ENCODE measurements at regions of chr12 and their contacts with region 1.

Region 1: DNA sequence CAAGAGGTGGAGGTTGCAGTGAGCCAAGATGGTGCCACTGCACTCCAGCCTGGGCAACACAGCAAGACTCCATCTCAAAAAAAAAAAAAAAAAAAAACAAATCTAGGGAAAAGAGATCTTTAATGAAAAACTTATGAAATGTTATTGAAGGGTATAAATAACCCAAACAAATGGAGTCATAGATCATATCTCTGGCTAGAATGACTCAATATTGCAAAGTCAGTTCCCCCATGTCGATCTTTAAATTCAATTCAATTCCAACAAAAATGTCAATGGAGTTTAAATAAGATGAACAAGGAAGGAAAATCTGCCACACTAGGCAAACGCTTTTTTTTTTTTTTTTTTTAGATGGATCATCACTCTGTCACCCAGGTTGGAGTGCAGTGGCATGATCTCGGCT is 78.7 kb downstream of the R3HDM2 start:
- DNase-seq: no peak
- ATAC-seq: no peak
- H3K4me3 ChIP-seq: no peak overlapping the region
- H3K27ac ChIP-seq: no peak overlapping the region
- H3K4me1 ChIP-seq: peaks cover 0 to 3% of the 10 kb centered on the region in 2 experiments; a peak in 1 of 5 replicates
- H3K27me3 ChIP-seq: no peaks in the 10 kb centered on the region
- CTCF ChIP-seq: no peak
- EP300 ChIP-seq: no peak
- POLR2A ChIP-seq: no peak
- RAD21 ChIP-seq: no peak

Region 2: DNA sequence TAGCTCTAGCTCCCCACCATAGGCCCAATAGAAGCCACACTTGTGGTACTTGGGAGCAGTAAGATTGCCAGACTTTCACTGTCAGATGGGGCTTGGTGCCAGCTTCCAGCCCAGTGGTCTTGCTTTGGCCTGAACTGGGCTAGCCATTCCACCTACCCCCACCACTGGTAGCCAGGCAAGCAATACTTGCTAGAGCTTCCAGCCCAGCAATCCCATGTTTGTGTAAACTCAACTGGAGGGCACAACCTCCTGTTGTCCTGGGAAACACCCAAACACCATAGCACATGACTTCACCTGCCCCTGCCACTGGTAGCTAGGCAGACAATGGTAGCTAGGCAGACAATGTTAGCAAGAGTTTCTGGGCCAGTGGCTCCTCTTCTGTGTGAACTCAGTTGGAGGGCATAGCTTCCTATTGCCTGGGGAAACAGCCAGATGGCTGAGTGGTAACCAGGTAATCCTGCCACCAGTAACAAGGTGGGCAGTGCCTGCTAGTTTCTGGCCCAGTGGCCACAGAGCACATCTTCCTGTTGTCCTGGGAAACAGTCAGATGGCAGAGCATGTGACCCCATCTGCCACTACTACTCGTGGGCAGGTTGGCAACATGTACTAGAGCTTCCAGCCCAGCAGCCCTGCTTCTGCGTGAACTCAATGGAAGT is 1931.7 kb before region 1 on chr12:
- CTCF ChIA-PET with region 1: no interaction called
- POLR2A ChIA-PET with region 1: no interaction called
- in situ Hi-C with region 1: no loop called
- intact Hi-C with region 1: no loop called
- DNase-seq: no peak
- ATAC-seq: no peak
- H3K4me3 ChIP-seq: no peak overlapping the region
- H3K27ac ChIP-seq: no peak overlapping the region
- H3K4me1 ChIP-seq: no peaks in the 10 kb centered on the region; a peak in 1 of 5 replicates
- H3K27me3 ChIP-seq: no peaks in the 10 kb centered on the region; a peak in 1 of 5 replicates
- CTCF ChIP-seq: no peak
- EP300 ChIP-seq: no peak
- POLR2A ChIP-seq: no peak
- RAD21 ChIP-seq: no peak

Region 3: DNA sequence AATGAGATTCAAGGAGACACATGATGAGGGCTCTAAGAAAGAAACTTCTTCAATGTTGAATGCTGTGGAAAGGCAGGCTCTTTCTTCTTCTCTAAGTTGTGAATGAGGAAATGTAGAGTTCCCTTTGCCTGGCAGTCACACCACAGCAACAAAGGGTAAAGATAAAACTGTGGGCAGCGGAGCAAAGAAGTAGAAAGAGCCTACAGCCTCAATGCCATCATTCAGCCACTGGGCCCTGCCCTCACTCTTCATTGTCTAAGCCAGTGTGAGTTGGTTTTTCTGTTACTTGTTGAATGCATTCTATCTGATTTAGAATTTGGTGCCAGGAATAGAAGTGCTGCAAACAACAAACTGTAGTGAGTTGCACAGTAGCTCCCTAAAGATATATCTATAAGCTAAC is 430.1 kb before region 1 on chr12:
- CTCF ChIA-PET with region 1: no interaction called
- POLR2A ChIA-PET with region 1: no interaction called
- in situ Hi-C with region 1: no loop called
- intact Hi-C with region 1: no loop called
- DNase-seq: no peak
- ATAC-seq: no peak
- H3K4me3 ChIP-seq: no peak overlapping the region
- H3K27ac ChIP-seq: no peak overlapping the region
- H3K4me1 ChIP-seq: no peaks in the 10 kb centered on the region
- H3K27me3 ChIP-seq: no peaks in the 10 kb centered on the region
- CTCF ChIP-seq: no peak
- EP300 ChIP-seq: no peak
- POLR2A ChIP-seq: no peak
- RAD21 ChIP-seq: no peak

Region 4: GRCh38 chr12:57309420-57309819 is 42.7 kb before region 1 on chr12:
- CTCF ChIA-PET with region 1: no interaction called
- POLR2A ChIA-PET with region 1: interaction called, 3 read pairs
- in situ Hi-C with region 1: no loop called
- intact Hi-C with region 1: loop called (anchors 5 kb)
- DNase-seq: no peak
- ATAC-seq: no peak
- H3K4me3 ChIP-seq: no peak overlapping the region
- H3K27ac ChIP-seq: no peak overlapping the region
- H3K4me1 ChIP-seq: peaks cover 5 to 8% of the 10 kb centered on the region in 2 experiments; a peak in 2 of 5 replicates
- H3K27me3 ChIP-seq: no peaks in the 10 kb centered on the region
- CTCF ChIP-seq: no peak
- EP300 ChIP-seq: no peak
- POLR2A ChIP-seq: no peak
- RAD21 ChIP-seq: no peak

Measured in K562 (cell line).